T-cell (primary cell): ENCODE measurements at regions of chrX and their contacts with region 1.

Region 1: GRCh38 chrX:48684134-48684533 is 535 bp downstream of the WAS start:
- DNase-seq: no peak
- ATAC-seq: peak in 2 of 4 experiments; percentile 6 to 9
- H3K4me3 ChIP-seq: peak overlapping the region; percentile 71 to 83
- H3K4me3 Mint-ChIP-seq: peak overlapping the region; percentile 90 to 93 (median 92)
- H3K27ac ChIP-seq: peak overlapping the region; percentile 83
- H3K27ac Mint-ChIP-seq: peak overlapping the region; percentile 93 to 94
- H3K4me1 ChIP-seq: peaks cover 16 to 48% of the 10 kb centered on the region in 2 experiments
- H3K4me1 Mint-ChIP-seq: peaks cover 52 to 68% (median 55%) of the 10 kb centered on the region in 3 donors
- H3K27me3 ChIP-seq: no peaks in the 10 kb centered on the region
- H3K27me3 Mint-ChIP-seq: no peaks in the 10 kb centered on the region

Region 2: GRCh38 chrX:48695925-48696300 is 11.8 kb after region 1 on chrX:
- CTCF ChIA-PET with region 1: no interaction called
- POLR2A ChIA-PET with region 1: interaction called in 1 of 2 experiments, 13 read pairs
- DNase-seq: peak in 1 of 35 experiments; percentile 5
- ATAC-seq: no peak
- H3K4me3 ChIP-seq: peak overlapping the region; percentile 63 to 68
- H3K4me3 Mint-ChIP-seq: peak overlapping the region; percentile 82 to 91 (median 90)
- H3K27ac ChIP-seq: peak overlapping the region; percentile 75
- H3K27ac Mint-ChIP-seq: peak overlapping the region; percentile 93 to 98
- H3K4me1 ChIP-seq: peaks cover 0 to 15% of the 10 kb centered on the region in 2 experiments
- H3K4me1 Mint-ChIP-seq: peaks cover 29 to 30% (median 30%) of the 10 kb centered on the region in 3 donors
- H3K27me3 ChIP-seq: no peaks in the 10 kb centered on the region
- H3K27me3 Mint-ChIP-seq: peaks cover 0 to 10% of the 10 kb centered on the region in 2 donors

Region 3: GRCh38 chrX:48720577-48721250 is 36.6 kb after region 1 on chrX:
- CTCF ChIA-PET with region 1: no interaction called
- POLR2A ChIA-PET with region 1: no interaction called
- DNase-seq: peak in 2 of 35 experiments; percentile 16 to 43
- ATAC-seq: peak; percentile 50 to 82 (median 61)
- H3K4me3 ChIP-seq: peak overlapping the region in 1 of 2 donors; percentile 10
- H3K4me3 Mint-ChIP-seq: no peak overlapping the region
- H3K27ac ChIP-seq: peak overlapping the region; percentile 80
- H3K27ac Mint-ChIP-seq: no peak overlapping the region
- H3K4me1 ChIP-seq: peaks cover 21 to 53% of the 10 kb centered on the region in 2 experiments
- H3K4me1 Mint-ChIP-seq: peaks cover 25 to 46% (median 28%) of the 10 kb centered on the region in 3 donors
- H3K27me3 ChIP-seq: no peaks in the 10 kb centered on the region
- H3K27me3 Mint-ChIP-seq: peaks cover 0 to 10% of the 10 kb centered on the region in 2 donors